ENCODE measurements at regions of chr5 and their contacts with region 1.

Region 1: DNA sequence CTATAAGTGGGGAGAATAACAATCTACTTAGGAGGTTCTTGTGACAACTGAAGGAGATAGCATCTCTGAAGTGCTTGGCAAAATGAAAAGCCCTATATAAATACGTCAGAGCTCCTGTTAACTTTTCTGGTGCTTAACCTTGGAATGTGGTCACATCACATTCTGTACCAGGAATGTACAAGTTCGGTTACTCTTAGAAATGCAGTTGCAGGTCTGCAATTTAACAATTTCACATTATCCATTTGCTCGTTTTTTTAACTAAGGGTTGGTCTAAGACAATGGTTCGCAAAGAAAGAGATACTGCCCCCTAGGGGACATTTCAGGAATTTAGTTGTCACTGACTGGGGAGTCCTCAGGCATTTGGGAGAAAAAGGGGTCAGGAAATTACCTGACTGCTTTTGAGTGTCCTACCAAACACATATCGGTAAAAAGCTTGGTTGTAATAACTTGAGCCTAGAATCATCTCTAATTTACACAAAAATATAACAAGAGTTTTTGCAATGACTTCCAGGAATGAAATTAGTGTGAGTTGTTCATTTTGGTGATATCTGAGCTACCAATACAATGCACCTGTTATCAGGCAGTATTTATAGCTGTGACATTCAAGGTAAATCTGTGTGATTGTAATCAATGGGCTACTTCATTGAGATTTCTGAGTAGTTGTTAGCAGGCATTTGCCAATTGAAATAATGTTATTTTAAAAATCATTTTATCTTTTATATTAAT is 5.4 kb upstream of the HBEGF start:
- DNase-seq: peak; percentile 67
- ATAC-seq: peak; percentile 87
- H3K4me3 Mint-ChIP-seq: no peak overlapping the region
- H3K27ac Mint-ChIP-seq: no peak overlapping the region
- H3K4me1 Mint-ChIP-seq: peaks cover 6% of the 10 kb centered on the region
- H3K27me3 Mint-ChIP-seq: peaks cover 7% of the 10 kb centered on the region
- CTCF ChIP-seq: peak; percentile 89

Region 2: DNA sequence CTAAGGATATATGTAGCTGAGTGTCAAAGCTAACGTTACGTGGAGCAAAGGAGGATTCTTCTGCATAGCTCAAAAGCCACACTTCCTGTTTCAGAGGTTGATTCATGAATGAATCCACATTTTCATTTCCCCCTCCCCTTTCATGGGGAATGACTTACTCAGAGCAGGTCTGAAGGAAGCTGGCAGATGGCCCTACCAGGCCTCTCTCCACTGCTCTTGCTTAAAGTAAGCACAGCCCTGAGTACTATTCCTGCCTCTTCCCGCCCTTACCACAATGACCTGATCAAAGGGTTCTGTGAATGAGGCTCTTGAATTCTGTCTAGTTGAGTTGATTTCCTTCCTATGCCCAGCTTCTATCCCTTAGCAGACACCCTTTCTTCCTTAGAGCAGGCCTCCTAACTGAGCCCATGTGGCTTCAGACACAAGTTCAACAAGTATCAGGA is 219.8 kb before region 1 on chr5:
- CTCF ChIA-PET with region 1: no interaction called
- POLR2A ChIA-PET with region 1: no interaction called
- intact Hi-C with region 1: no loop called
- DNase-seq: peak; percentile 30
- ATAC-seq: peak; percentile 80
- H3K4me3 Mint-ChIP-seq: no peak overlapping the region
- H3K27ac Mint-ChIP-seq: no peak overlapping the region
- H3K4me1 Mint-ChIP-seq: peaks cover 37% of the 10 kb centered on the region
- H3K27me3 Mint-ChIP-seq: no peaks in the 10 kb centered on the region
- CTCF ChIP-seq: no peak

Region 3: GRCh38 chr5:140244525-140245025 is 107.2 kb before region 1 on chr5:
- CTCF ChIA-PET with region 1: interaction called, 874 read pairs
- POLR2A ChIA-PET with region 1: interaction called, 5 read pairs
- intact Hi-C with region 1: loop called (anchors 1 kb)
- DNase-seq: peak; percentile 91
- ATAC-seq: peak; percentile 77
- H3K4me3 Mint-ChIP-seq: no peak overlapping the region
- H3K27ac Mint-ChIP-seq: no peak overlapping the region
- H3K4me1 Mint-ChIP-seq: peaks cover 10% of the 10 kb centered on the region
- H3K27me3 Mint-ChIP-seq: no peaks in the 10 kb centered on the region
- CTCF ChIP-seq: peak; percentile 91

Region 4: GRCh38 chr5:140282266-140282665 is 69.5 kb before region 1 on chr5:
- CTCF ChIA-PET with region 1: interaction called, 22 read pairs
- POLR2A ChIA-PET with region 1: no interaction called
- intact Hi-C with region 1: no loop called
- DNase-seq: no peak
- ATAC-seq: no peak
- H3K4me3 Mint-ChIP-seq: no peak overlapping the region
- H3K27ac Mint-ChIP-seq: no peak overlapping the region
- H3K4me1 Mint-ChIP-seq: peaks cover 23% of the 10 kb centered on the region
- H3K27me3 Mint-ChIP-seq: no peaks in the 10 kb centered on the region
- CTCF ChIP-seq: no peak

Region 5: DNA sequence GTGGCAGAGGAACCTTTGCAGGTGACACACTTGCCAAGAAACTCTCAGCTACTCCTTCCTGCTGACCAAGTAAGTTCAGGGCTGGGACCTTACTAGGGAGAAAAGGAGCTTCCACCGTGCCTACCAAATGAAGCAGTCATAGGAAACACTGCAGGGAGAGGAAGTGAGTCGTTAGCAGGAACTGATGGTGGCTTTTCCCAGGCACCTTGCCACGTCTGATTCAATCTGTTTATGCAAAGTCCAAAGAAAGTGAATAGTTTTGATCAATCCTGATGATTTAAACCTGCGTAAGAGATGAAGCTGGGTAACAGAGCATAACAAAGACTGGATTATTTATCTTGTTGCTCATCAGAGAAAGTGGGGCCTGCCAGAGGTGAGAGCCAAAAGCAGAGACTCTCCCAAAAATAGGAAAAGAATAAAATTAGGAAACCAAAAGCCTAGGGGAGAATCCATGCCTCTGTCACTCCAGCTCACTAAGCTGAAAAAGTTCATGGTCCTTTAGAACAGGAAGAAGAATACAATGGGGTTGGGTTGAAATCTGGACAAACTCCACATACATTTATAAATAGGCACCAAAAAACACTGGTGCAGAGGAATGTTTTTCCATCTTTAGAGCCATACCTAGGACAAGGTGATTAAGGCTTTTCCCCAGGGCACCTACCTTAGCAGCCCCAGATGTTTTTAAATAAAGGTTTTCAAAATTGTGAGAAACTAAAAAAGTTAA is 39.5 kb before region 1 on chr5:
- CTCF ChIA-PET with region 1: interaction called, 17 read pairs
- POLR2A ChIA-PET with region 1: interaction called, 4 read pairs
- intact Hi-C with region 1: no loop called
- DNase-seq: no peak
- ATAC-seq: no peak
- H3K4me3 Mint-ChIP-seq: no peak overlapping the region
- H3K27ac Mint-ChIP-seq: no peak overlapping the region
- H3K4me1 Mint-ChIP-seq: no peaks in the 10 kb centered on the region
- H3K27me3 Mint-ChIP-seq: no peaks in the 10 kb centered on the region
- CTCF ChIP-seq: no peak

Region 6: DNA sequence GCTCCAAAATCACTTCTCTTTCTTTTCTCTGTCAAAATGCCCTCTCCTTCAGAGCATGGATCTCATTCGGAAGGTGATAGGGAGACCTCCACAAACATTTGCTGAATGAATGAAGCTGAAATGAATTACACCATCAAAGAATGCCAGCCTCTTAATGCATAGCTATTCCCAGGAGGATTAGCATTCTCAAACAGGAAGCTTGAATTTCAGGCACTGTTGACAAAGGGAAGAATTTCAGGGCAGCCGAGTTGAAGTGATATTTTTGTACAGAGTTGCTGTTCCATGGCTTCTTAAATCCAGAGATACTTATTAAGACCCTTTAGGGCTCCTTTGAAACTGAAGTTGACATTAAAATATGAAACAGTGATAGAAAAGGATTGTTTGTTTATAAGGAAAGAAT is 24.2 kb before region 1 on chr5:
- CTCF ChIA-PET with region 1: interaction called, 11 read pairs
- POLR2A ChIA-PET with region 1: no interaction called
- intact Hi-C with region 1: no loop called
- DNase-seq: no peak
- ATAC-seq: no peak
- H3K4me3 Mint-ChIP-seq: no peak overlapping the region
- H3K27ac Mint-ChIP-seq: no peak overlapping the region
- H3K4me1 Mint-ChIP-seq: peaks cover 7% of the 10 kb centered on the region
- H3K27me3 Mint-ChIP-seq: no peaks in the 10 kb centered on the region
- CTCF ChIP-seq: no peak

Region 7: GRCh38 chr5:140362860-140363630 is 11.3 kb after region 1 on chr5:
- CTCF ChIA-PET with region 1: interaction called, 58 read pairs
- POLR2A ChIA-PET with region 1: interaction called, 3 read pairs
- intact Hi-C with region 1: no loop called
- DNase-seq: peak; percentile 91
- ATAC-seq: peak; percentile 96
- H3K4me3 Mint-ChIP-seq: peak overlapping the region; percentile 70
- H3K27ac Mint-ChIP-seq: no peak overlapping the region
- H3K4me1 Mint-ChIP-seq: peaks cover 5% of the 10 kb centered on the region
- H3K27me3 Mint-ChIP-seq: peaks cover 6% of the 10 kb centered on the region
- CTCF ChIP-seq: peak; percentile 91

Region 8: GRCh38 chr5:140420226-140420570 is 68.4 kb after region 1 on chr5:
- CTCF ChIA-PET with region 1: no interaction called
- POLR2A ChIA-PET with region 1: no interaction called
- intact Hi-C with region 1: no loop called
- DNase-seq: no peak
- ATAC-seq: no peak
- H3K4me3 Mint-ChIP-seq: no peak overlapping the region
- H3K27ac Mint-ChIP-seq: peak overlapping the region; percentile 23
- H3K4me1 Mint-ChIP-seq: peaks cover 52% of the 10 kb centered on the region
- H3K27me3 Mint-ChIP-seq: no peaks in the 10 kb centered on the region
- CTCF ChIP-seq: no peak

Region 9: DNA sequence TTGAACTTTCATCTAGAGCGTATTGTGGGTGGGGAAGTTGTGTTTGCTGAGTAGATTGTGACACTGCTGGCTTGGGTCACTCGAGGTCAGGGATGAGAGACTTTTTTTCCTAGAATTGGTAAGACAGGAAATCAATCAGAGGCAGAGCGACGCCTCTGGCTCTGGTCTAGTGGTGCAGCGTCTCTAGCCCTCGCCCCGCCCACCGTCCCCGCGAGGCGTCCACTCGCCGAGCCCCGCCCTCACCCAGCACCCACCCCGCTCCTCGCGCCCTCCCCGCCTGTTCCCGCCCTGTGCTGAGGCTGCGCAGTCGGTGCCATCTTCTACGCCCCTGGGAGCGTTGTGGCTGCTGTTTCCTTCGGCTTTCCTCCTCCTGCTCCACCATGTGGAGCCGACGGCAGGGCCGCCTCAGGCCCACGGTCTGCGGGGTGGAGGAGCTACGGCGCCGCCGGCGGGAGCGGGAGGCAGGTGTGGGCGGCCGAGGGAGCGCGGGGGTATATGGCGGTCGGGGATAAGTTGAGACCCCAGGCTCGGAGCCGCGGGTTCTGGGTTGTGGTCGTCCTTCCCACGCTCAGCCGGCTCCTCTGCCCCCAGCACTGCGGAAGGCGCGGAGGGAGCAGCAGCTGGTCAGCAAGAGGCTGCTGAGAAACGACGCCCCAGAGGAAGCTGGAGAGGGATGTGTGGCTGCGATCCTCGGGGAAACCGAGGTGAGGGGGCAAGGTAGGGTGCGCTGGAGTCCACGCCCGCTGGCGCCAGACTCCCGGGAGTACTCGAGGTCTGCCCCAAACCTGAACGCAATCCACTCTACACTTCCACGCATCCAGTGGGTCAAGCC is 287.6 kb after region 1 on chr5 and contains the start of gene TMCO6:
- CTCF ChIA-PET with region 1: interaction called, 10 read pairs
- POLR2A ChIA-PET with region 1: no interaction called
- intact Hi-C with region 1: loop called (anchors 5 kb)
- DNase-seq: peak; percentile 98
- ATAC-seq: peak; percentile 97
- H3K4me3 Mint-ChIP-seq: peak within 1 kb of the TSS; percentile 78
- H3K27ac Mint-ChIP-seq: peak within 1 kb of the TSS; percentile 86
- H3K4me1 Mint-ChIP-seq: peaks cover 42% of the 10 kb centered on the region
- H3K27me3 Mint-ChIP-seq: no peaks in the 10 kb centered on the region
- CTCF ChIP-seq: peak; percentile 72
- total RNA-seq, gene TMCO6: 31.7 to 33.2 TPM

Region 10: GRCh38 chr5:140916349-140916748 is 564.6 kb after region 1 on chr5:
- CTCF ChIA-PET with region 1: no interaction called
- POLR2A ChIA-PET with region 1: no interaction called
- intact Hi-C with region 1: no loop called
- DNase-seq: no peak
- ATAC-seq: no peak
- H3K4me3 Mint-ChIP-seq: no peak overlapping the region
- H3K27ac Mint-ChIP-seq: no peak overlapping the region
- H3K4me1 Mint-ChIP-seq: no peaks in the 10 kb centered on the region
- H3K27me3 Mint-ChIP-seq: peaks cover 3% of the 10 kb centered on the region
- CTCF ChIP-seq: no peak

Measured in activated CD8-positive, alpha-beta T cell treated with anti-CD3 and anti-CD28 coated beads for 36 hours (primary cell).